ENCODE measurements at regions of chr18 and their contacts with region 1.

Region 1: GRCh38 chr18:2083691-2084090 is 487.6 kb downstream of the METTL4 start:
- DNase-seq: peak; percentile 44
- ATAC-seq: peak; percentile 49; the same call in 1 of the 2 replicates
- H3K4me3 ChIP-seq: no peak overlapping the region
- H3K27ac ChIP-seq: no peak overlapping the region
- H3K4me1 ChIP-seq: no peaks in the 10 kb centered on the region
- H3K27me3 ChIP-seq: peaks cover 19% of the 10 kb centered on the region
- CTCF ChIP-seq: peak; percentile 63

Region 2: GRCh38 chr18:1544016-1544415 is 539.7 kb before region 1 on chr18:
- CTCF ChIA-PET with region 1: no interaction called
- POLR2A ChIA-PET with region 1: no interaction called
- intact Hi-C with region 1: no loop called
- DNase-seq: no peak
- ATAC-seq: no peak
- H3K4me3 ChIP-seq: no peak overlapping the region
- H3K27ac ChIP-seq: no peak overlapping the region
- H3K4me1 ChIP-seq: no peaks in the 10 kb centered on the region
- H3K27me3 ChIP-seq: peaks cover 14% of the 10 kb centered on the region; the same call in 1 of the 2 replicates
- CTCF ChIP-seq: no peak

Region 3: GRCh38 chr18:1914490-1914889 is 169.2 kb before region 1 on chr18:
- CTCF ChIA-PET with region 1: no interaction called
- POLR2A ChIA-PET with region 1: no interaction called
- intact Hi-C with region 1: loop called (anchors 10 kb)
- DNase-seq: peak; percentile 56
- ATAC-seq: peak; percentile 81
- H3K4me3 ChIP-seq: no peak overlapping the region
- H3K27ac ChIP-seq: no peak overlapping the region
- H3K4me1 ChIP-seq: no peaks in the 10 kb centered on the region
- H3K27me3 ChIP-seq: no peaks in the 10 kb centered on the region
- CTCF ChIP-seq: peak; percentile 76

Region 4: GRCh38 chr18:1994471-1994870 is 89.2 kb before region 1 on chr18:
- CTCF ChIA-PET with region 1: no interaction called
- POLR2A ChIA-PET with region 1: no interaction called
- intact Hi-C with region 1: no loop called
- DNase-seq: no peak
- ATAC-seq: no peak
- H3K4me3 ChIP-seq: no peak overlapping the region
- H3K27ac ChIP-seq: no peak overlapping the region
- H3K4me1 ChIP-seq: no peaks in the 10 kb centered on the region
- H3K27me3 ChIP-seq: peaks cover 69% of the 10 kb centered on the region
- CTCF ChIP-seq: no peak

Region 5: DNA sequence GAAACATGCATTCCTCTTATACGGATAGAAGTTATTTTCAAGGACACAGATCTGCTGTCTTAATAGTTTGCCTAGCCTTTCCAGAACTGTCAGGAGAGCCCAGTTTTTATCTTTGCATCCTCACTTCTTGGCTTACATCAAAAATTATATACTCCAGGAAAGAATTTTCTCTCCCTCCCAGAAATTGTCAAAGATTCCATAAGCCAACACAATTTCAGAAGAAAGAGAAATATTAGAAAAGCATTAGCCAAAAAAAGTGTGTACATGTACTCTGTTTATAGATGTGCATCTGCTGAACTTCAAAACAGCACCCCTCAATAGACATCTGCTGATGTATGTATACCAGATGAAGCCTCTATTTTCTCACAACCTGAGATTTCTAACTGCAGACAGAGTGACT is 277.2 kb after region 1 on chr18:
- CTCF ChIA-PET with region 1: no interaction called
- POLR2A ChIA-PET with region 1: no interaction called
- intact Hi-C with region 1: no loop called
- DNase-seq: no peak
- ATAC-seq: no peak
- H3K4me3 ChIP-seq: no peak overlapping the region
- H3K27ac ChIP-seq: no peak overlapping the region
- H3K4me1 ChIP-seq: no peaks in the 10 kb centered on the region
- H3K27me3 ChIP-seq: no peaks in the 10 kb centered on the region
- CTCF ChIP-seq: no peak